ENCODE measurements at regions of chr16 and their contacts with region 1.

Region 1: DNA sequence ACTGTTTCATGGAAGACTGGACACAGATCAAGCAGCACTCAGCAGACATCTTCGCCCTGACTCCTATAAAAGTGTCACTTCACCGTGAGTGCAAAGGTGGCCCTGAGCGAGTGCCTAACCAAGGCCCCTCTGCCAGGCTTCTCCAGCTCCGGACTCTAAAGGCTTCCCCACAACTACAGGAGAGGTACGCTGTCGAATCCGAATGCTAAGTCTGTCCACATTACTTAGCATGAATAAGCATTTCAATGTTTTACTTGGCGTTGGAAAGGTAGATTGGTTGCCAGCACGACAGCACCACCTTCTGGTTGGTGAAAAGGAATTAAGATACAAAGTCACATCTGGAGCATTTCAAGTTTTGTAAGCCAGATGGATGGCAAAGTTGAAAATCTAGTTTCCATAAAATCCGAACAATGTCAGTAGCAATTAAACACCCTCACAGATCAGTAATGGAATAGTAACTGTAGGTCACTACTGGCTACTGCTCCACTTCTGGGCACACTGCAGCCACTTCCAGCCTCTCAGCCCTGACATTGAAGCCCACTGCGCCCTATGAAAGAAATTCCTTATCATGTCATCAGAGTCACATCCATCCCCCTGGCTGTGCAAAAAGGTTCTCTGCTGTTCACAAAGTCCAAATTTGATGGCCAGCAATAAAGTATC is 100.9 kb downstream of the PARN start:
- DNase-seq: peak; percentile 78
- H3K4me3 ChIP-seq: no peak overlapping the region
- H3K27ac ChIP-seq: no peak overlapping the region
- H3K4me1 ChIP-seq: no peaks in the 10 kb centered on the region
- H3K27me3 ChIP-seq: no peaks in the 10 kb centered on the region
- CTCF ChIP-seq: peak; percentile 62

Region 2: DNA sequence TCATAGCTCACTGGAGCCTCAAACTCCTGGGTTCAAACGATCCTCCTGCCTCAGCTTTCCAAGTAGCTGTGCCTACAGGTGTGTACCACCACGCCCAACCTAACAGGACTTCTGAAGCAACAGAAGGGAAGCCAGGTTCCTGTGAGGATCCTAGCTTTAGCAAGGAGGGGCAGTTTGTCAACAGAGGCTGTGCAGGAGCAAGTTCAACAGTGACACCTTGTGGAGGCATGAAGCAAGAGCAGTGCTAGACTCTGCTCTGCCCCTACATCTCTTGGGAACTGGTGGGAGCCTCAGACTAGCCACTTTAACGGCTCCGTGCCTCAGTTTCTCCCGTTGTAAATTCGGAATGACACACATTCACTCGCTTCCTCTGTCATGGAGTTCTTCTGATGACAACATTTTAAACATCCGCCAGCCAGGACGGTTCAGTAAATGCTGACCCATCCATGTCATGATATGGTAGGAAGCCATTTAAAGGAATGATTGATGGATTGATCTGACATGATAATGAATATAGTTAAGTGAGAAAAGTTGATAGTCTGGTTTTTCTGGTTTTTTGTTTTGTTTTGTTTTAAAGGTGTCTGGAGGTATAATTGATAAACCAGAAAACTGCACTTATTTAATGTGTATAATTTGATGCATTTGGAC is 239.3 kb before region 1 on chr16:
- intact Hi-C with region 1: no loop called
- DNase-seq: no peak
- H3K4me3 ChIP-seq: no peak overlapping the region
- H3K27ac ChIP-seq: no peak overlapping the region
- H3K4me1 ChIP-seq: peaks cover 4% of the 10 kb centered on the region
- H3K27me3 ChIP-seq: no peaks in the 10 kb centered on the region
- CTCF ChIP-seq: no peak

Region 3: DNA sequence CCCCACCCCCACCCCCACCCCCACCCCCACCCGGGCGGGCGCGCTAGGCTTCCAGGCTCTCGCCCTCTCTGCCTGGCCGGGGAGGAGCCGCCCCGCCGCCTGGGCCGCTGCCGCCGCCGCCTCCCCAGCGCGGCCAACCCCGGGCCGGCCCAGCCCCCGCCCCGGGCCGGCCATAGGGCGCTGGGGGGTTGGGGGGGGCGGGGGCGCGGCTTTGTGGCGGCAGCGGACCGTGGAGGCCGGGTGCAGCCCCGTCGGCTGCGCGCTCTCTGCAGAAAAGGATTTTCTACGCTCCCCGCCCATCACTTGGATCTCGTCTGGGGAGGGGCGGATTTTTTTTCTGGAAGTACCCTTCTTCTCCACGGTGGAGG is 227.1 kb before region 1 on chr16:
- intact Hi-C with region 1: loop called (anchors 2 kb)
- DNase-seq: peak; percentile 39
- H3K4me3 ChIP-seq: peak overlapping the region; percentile 64
- H3K27ac ChIP-seq: no peak overlapping the region
- H3K4me1 ChIP-seq: no peaks in the 10 kb centered on the region
- H3K27me3 ChIP-seq: peaks cover 7% of the 10 kb centered on the region
- CTCF ChIP-seq: no peak

Region 4: DNA sequence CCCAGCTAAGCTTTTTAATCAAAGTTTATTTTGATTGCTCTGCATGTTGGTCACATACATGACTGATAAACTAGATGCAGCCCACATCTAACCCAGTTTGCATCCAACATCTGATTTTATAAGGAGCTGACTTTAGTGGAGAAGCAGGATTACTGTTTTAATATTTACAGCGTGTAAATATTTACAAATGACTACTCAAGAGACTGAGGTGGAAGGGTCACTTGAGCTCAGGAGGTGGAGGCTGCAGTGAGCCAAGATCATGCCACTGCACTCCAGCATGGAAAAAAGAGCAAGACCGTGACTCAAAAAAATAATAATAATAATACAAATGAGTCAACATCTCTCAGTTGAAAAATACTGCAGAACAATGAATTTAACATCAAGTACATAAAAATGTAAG is 50.1 kb after region 1 on chr16:
- intact Hi-C with region 1: no loop called
- DNase-seq: no peak
- H3K4me3 ChIP-seq: no peak overlapping the region
- H3K27ac ChIP-seq: no peak overlapping the region
- H3K4me1 ChIP-seq: peaks cover 5% of the 10 kb centered on the region
- H3K27me3 ChIP-seq: no peaks in the 10 kb centered on the region
- CTCF ChIP-seq: no peak